Ascending aorta (tissue), 2 donors: ENCODE measurements at regions of chr1 and their contacts with region 1.

Region 1: DNA sequence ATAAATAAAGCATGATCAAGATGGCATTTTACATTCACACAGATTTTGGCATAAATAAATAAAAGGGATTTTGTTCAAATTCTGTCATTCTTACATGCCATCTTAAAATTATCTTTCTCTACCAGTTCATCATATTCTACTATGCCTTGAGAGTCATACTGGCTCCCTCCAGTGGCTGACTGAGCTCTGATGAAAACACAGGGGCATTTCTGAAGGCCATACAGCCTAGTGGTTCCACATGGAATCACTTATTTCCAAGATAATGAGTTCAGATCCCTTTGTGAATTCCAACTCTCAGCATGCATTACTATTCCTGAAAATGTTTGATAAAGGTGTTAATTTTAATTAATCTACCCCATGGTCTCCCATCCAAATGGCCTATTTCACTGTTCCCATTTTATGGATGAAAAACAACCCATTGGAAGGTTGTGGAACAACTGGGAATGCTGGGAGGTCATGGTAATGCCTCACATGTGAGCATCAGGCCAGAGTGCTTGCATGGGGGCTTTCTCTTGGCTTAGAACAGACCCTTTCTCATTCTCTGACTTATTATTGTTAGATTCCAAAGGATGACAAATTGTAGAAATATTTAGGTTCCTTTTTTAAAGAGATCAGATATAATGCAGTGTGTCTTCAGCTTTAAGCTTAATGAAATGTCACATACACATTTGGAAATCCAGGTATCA is 622.4 kb upstream of the PKN2 start:
- DNase-seq: no peak
- H3K4me3 ChIP-seq: no peak overlapping the region
- H3K27ac ChIP-seq: no peak overlapping the region
- H3K4me1 ChIP-seq: no peaks in the 10 kb centered on the region
- H3K27me3 ChIP-seq: no peaks in the 10 kb centered on the region
- CTCF ChIP-seq: peak; percentile 44 to 73 (median 67)

Region 2: GRCh38 chr1:87318056-87318650 is 743.5 kb before region 1 on chr1:
- intact Hi-C with region 1: loop called (anchors 2 kb)
- DNase-seq: no peak
- H3K4me3 ChIP-seq: no peak overlapping the region
- H3K27ac ChIP-seq: no peak overlapping the region
- H3K4me1 ChIP-seq: no peaks in the 10 kb centered on the region
- H3K27me3 ChIP-seq: no peaks in the 10 kb centered on the region
- CTCF ChIP-seq: no peak

Region 3: DNA sequence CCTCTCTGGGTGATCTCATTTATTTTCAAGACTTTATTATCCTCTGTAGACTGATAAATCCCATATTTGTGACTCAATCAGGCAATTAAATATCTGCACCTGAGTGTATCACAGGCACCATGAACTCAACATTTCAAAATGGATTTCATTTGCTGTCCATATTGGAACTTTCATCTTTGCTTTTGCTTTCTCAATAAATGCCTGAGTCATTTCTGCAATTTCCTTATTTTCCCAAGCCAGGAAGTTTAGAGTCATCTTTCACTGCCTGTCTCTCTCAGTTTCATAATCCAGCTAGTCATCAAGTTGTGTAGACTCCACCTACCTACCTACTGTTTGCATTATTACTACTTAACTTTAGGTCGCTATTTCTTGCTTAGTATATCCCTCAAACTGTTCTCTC is 192.1 kb before region 1 on chr1:
- intact Hi-C with region 1: no loop called
- DNase-seq: no peak
- H3K4me3 ChIP-seq: no peak overlapping the region
- H3K27ac ChIP-seq: no peak overlapping the region
- H3K4me1 ChIP-seq: no peaks in the 10 kb centered on the region
- H3K27me3 ChIP-seq: no peaks in the 10 kb centered on the region
- CTCF ChIP-seq: no peak

Region 4: GRCh38 chr1:88237058-88237457 is 175.4 kb after region 1 on chr1:
- intact Hi-C with region 1: no loop called
- DNase-seq: no peak
- H3K4me3 ChIP-seq: no peak overlapping the region
- H3K27ac ChIP-seq: no peak overlapping the region
- H3K4me1 ChIP-seq: no peaks in the 10 kb centered on the region
- H3K27me3 ChIP-seq: no peaks in the 10 kb centered on the region
- CTCF ChIP-seq: no peak